T-cell (primary cell): ENCODE measurements at regions of chr20 and their contacts with region 1.

Region 1: DNA sequence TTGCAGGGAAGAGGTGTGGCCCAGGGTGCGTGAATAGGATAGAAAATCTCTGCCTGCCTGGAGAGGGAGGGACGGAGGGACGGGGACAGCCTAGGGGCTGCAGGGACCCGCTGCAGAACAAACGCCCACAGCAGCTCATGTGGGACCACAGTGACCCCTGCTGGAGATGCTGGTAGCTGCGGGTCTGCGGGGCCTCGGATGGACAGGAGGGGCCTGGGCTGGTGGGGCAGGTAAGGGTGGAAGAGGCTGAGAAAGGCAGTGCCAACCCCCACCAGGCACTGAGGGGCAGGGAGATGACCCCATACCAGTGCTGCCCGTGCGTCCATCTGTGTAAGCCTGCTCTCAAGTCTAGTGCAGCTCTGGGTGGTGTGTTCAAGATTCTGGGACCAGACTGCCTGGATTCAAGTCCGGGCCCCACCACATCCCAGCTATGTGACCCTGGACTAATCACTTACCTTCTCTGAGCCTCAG is 39.4 kb downstream of the KIAA1755 start:
- DNase-seq: peak; percentile 11 to 72 (median 54)
- ATAC-seq: peak; percentile 52 to 80 (median 64)
- H3K4me3 ChIP-seq: no peak overlapping the region
- H3K4me3 Mint-ChIP-seq: no peak overlapping the region
- H3K27ac ChIP-seq: no peak overlapping the region
- H3K27ac Mint-ChIP-seq: no peak overlapping the region
- H3K4me1 ChIP-seq: peaks cover 0 to 5% of the 10 kb centered on the region in 2 experiments
- H3K4me1 Mint-ChIP-seq: peaks cover 0 to 6% (median 5%) of the 10 kb centered on the region in 3 donors
- H3K27me3 ChIP-seq: peaks cover 0 to 26% of the 10 kb centered on the region in 2 experiments
- H3K27me3 Mint-ChIP-seq: peaks cover 2 to 3% of the 10 kb centered on the region in 2 donors

Region 2: DNA sequence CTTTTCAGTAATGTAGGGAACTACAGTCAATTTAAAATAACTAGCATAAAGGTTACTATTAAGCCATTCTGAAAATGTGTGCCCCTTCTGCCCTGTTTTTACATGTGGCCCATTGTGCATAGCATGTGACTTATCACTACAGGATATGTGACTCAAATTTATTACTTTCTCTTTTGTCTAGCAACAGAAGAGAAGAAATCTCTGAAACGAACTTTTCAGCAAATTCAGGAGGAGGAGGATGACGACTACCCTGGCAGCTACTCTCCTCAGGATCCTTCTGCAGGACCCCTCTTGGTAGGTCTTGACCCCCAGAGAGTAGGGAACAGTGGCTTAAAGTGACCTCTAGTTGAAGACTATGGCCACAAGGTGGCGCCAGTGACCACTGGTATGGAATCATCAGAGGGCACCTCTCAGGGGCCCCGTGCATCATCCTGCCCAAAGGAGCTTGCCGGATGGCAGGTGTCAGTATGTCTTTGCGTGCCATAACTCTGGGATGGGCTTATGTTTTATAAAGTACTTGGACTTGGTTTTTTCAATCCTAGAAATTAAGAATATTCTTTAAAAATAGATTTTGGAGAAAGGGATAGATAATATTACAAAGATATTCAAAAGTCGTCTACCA is 163.7 kb before region 1 on chr20:
- CTCF ChIA-PET with region 1: interaction called, 3 to 20 read pairs
- POLR2A ChIA-PET with region 1: no interaction called
- DNase-seq: peak; percentile 38 to 87 (median 67)
- ATAC-seq: peak; percentile 77 to 94 (median 85)
- H3K4me3 ChIP-seq: no peak overlapping the region
- H3K4me3 Mint-ChIP-seq: no peak overlapping the region
- H3K27ac ChIP-seq: no peak overlapping the region
- H3K27ac Mint-ChIP-seq: peak overlapping the region; percentile 6 to 49
- H3K4me1 ChIP-seq: no peaks in the 10 kb centered on the region
- H3K4me1 Mint-ChIP-seq: peaks cover 28 to 32% (median 29%) of the 10 kb centered on the region in 3 donors
- H3K27me3 ChIP-seq: no peaks in the 10 kb centered on the region
- H3K27me3 Mint-ChIP-seq: no peaks in the 10 kb centered on the region

Region 3: DNA sequence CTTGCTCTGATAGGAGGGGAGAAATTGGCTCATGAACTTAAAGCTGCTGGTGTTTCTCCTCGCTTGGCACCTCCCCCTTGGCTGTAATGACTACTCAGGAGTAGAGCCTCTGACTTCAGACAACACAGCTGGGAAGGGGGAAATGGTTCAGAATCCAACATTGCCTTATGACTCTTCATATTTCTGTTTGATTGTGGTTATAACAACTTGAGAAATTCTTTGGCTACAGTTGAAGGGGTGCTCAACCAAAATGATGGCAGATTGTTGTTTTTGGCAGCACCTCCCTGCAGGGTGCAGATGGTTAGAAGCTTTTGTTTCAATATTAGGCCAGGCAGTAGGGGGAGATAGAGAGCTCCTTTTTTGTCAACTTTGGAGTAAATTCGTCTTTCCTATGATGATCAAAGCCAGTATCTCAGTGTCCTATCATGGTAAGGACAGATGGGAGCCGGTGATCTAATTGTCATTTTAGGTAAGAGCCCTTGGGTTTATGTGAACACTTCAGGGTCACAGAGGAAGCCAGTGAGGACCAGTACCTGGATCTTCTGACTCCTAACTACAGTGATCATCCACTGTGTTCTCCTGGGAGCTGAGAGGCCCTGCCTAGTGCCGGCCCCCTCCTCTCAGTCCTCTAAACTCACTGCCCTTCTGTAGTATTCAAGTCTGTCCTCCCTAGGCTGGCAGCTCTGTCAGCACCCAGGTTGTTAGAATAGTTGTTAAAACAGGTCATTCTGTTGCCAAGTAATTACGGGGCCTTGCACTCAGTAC is 147.7 kb before region 1 on chr20:
- CTCF ChIA-PET with region 1: interaction called in 1 of 2 experiments, 21 read pairs
- POLR2A ChIA-PET with region 1: no interaction called
- DNase-seq: peak in 7 of 35 experiments; percentile 5 to 59 (median 16)
- ATAC-seq: peak; percentile 36 to 52 (median 48)
- H3K4me3 ChIP-seq: no peak overlapping the region
- H3K4me3 Mint-ChIP-seq: no peak overlapping the region
- H3K27ac ChIP-seq: no peak overlapping the region
- H3K27ac Mint-ChIP-seq: peak overlapping the region in 1 of 2 donors; percentile 9
- H3K4me1 ChIP-seq: no peaks in the 10 kb centered on the region
- H3K4me1 Mint-ChIP-seq: peaks cover 10 to 24% (median 24%) of the 10 kb centered on the region in 3 donors
- H3K27me3 ChIP-seq: no peaks in the 10 kb centered on the region
- H3K27me3 Mint-ChIP-seq: no peaks in the 10 kb centered on the region

Region 4: DNA sequence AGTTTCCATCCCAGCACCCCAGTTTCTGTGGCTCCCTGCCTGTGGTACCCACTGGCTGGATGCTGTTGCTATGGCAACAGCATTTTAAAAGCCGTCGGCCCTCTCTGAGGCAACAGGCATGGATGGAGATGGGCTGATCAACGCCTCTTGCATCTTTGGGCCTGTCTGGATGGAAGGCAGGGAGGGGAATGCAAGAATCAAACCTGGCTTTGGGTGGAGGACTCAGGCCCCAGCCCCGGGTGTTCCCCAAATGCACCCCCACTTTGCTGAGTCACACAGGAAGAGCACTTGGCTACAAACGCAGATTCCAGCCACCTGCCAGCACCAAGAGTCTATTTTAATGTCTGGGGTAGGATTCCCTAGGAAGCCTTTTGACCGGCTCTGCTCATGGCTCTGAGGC is 10.4 kb before region 1 on chr20:
- CTCF ChIA-PET with region 1: interaction called in 1 of 2 experiments, 12 read pairs
- POLR2A ChIA-PET with region 1: no interaction called
- DNase-seq: no peak
- ATAC-seq: no peak
- H3K4me3 ChIP-seq: no peak overlapping the region
- H3K4me3 Mint-ChIP-seq: no peak overlapping the region
- H3K27ac ChIP-seq: no peak overlapping the region
- H3K27ac Mint-ChIP-seq: no peak overlapping the region
- H3K4me1 ChIP-seq: no peaks in the 10 kb centered on the region
- H3K4me1 Mint-ChIP-seq: no peaks in the 10 kb centered on the region
- H3K27me3 ChIP-seq: peaks cover 0 to 31% of the 10 kb centered on the region in 2 experiments
- H3K27me3 Mint-ChIP-seq: peaks cover 6 to 14% of the 10 kb centered on the region in 2 donors